Activated T-helper 1 cell treated with anti-CD3 and anti-CD28 coated beads, Interleukin-12 subunit alpha, Interleukin-12 subunit beta, Interleukin-2, Interleukin-4 antibody, amounts not matched to agents 30 ng/mL and 10 ng/mL and 1 ng/mL, durations not matched to agents 14 hours and 24 hours and 36 hours (primary cell): ENCODE measurements at regions of chr10 and their contacts with region 1.

Region 1: GRCh38 chr10:119207367-119207668 is at the start of gene GRK5:
- DNase-seq: peak; percentile 98
- H3K4me3 Mint-ChIP-seq: peak within 1 kb of the TSS; percentile 99
- H3K27ac Mint-ChIP-seq: peak within 1 kb of the TSS; percentile 99
- H3K4me1 Mint-ChIP-seq: peaks cover 49% of the 10 kb centered on the region
- H3K27me3 Mint-ChIP-seq: no peaks in the 10 kb centered on the region
- total RNA-seq, gene GRK5: 25.3 and 25.8 TPM in 2 replicates

Region 2: GRCh38 chr10:118754720-118755480 is 452.4 kb before region 1 on chr10 and contains the start of gene CACUL1:
- intact Hi-C with region 1: loop called (anchors 10 kb)
- DNase-seq: peak; percentile 100
- H3K4me3 Mint-ChIP-seq: peak within 1 kb of the TSS; percentile 87
- H3K27ac Mint-ChIP-seq: peak within 1 kb of the TSS; percentile 86
- H3K4me1 Mint-ChIP-seq: peaks cover 26% of the 10 kb centered on the region
- H3K27me3 Mint-ChIP-seq: peaks cover 15% of the 10 kb centered on the region
- total RNA-seq, gene CACUL1: 30.1 and 32.7 TPM in 2 replicates

Region 3: GRCh38 chr10:119165171-119166110 is 41.9 kb before region 1 on chr10 and contains the start of gene SFXN4:
- intact Hi-C with region 1: loop called (anchors 1 kb)
- DNase-seq: peak; percentile 82
- H3K4me3 Mint-ChIP-seq: peak within 1 kb of the TSS; percentile 91
- H3K27ac Mint-ChIP-seq: peak within 1 kb of the TSS; percentile 94
- H3K4me1 Mint-ChIP-seq: peaks cover 45% of the 10 kb centered on the region
- H3K27me3 Mint-ChIP-seq: no peaks in the 10 kb centered on the region
- total RNA-seq, gene SFXN4: 58.2 and 58.7 TPM in 2 replicates

Region 4: DNA sequence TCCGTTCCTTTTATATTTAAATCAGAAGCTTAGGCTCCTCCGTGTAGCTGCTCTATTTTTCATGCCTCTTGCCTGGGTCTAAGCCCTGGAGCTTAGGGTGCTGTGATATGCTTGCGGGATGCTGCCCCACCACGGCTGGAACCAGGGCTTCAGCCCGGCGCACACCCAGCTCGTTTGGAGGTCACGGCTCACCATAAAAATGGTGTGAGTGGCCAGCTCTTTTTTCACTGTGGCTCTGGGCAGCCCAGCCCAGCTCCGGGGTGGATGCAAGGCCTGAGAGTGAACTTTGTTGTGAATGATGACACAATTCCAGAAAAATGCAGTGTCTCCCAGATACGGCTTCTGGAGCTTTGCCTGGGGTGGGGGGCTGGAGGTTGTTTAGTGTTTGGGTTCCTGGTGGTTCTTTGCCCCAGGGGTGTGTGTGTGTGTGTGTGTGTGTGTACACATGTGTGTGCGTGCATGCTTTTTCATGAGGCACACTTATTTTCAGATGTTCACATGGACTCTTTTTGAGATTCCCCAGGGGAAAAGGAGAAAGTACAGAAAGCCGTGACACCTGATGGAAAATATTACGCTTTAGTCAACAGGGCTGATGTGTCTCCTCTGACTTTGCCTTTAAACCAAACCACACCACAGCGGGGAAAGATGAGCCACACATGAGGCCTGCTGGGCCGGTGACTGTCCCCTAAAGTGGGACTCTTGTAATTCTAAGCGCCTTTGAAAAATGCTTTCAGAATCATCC is 46.3 kb after region 1 on chr10:
- intact Hi-C with region 1: loop called (anchors 2 kb)
- DNase-seq: no peak
- H3K4me3 Mint-ChIP-seq: peak overlapping the region; percentile 15
- H3K27ac Mint-ChIP-seq: peak overlapping the region; percentile 88
- H3K4me1 Mint-ChIP-seq: peaks cover 63% of the 10 kb centered on the region
- H3K27me3 Mint-ChIP-seq: no peaks in the 10 kb centered on the region

Region 5: DNA sequence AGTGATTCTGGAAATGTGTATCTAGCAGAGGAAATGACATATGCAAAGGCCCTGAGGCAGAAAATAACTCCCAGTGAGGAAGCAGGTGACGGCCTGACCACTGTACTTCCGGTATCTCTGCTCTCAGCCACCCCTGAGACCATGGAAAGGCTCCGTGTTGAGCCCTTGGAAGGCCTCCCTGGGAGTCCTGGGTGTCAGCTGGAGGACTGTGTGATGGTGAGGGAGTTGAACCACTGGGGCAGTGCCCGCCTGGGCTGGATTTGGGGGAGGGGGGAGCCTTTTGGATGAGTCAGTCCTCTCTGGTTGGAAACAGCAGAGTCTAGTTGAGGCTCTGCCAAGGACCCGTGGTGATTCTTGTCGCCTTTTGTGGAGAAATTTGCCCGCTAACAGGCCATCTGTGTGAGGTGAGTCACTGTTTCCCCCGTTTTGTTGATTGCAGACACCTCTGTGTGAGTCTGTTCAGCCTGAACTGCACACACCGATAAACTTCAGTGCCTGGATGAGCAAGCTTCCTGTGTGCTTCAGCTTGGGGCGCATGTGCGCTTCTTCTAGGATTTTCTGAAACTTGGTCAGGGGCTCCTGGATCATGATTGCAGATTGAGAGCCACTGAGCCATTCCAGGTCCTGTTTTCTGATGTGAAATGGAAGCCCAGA is 98.7 kb after region 1 on chr10:
- intact Hi-C with region 1: loop called (anchors 1 kb)
- DNase-seq: peak; percentile 82
- H3K4me3 Mint-ChIP-seq: peak overlapping the region; percentile 79
- H3K27ac Mint-ChIP-seq: peak overlapping the region; percentile 100
- H3K4me1 Mint-ChIP-seq: peaks cover 89% of the 10 kb centered on the region
- H3K27me3 Mint-ChIP-seq: peaks cover 4% of the 10 kb centered on the region

Region 6: DNA sequence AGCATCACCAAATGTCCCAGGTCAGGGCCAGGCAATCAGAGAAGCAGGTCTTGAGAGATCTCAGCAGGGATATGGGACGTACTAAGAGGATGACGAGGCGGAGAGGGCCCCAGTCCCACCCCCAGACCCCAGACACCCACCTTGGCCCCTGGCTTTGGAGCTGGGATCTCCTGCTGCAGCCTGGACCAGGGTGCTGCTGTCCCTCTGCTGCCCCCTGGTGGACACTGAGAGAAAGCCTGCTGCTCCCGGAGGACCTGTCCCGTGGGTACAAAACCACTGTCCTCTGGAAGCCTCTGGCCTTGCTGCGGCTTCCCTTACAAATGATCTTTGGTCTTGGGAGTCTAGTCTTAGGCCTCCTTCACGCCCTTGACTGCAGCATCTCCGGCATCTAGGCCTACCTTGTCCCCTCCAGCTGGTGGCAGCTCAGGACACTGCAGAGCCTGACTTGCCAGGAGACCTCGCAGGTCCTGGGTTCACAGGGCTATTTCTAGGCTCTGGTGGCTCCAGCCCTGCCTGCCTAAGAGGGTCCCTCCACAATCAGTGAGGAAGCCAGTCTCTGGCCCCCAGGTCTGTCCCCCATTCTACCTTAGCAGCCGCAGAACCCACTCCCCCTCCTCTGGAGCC is 238.1 kb after region 1 on chr10:
- intact Hi-C with region 1: loop called (anchors 1 kb)
- DNase-seq: peak; percentile 71
- H3K4me3 Mint-ChIP-seq: no peak overlapping the region
- H3K27ac Mint-ChIP-seq: no peak overlapping the region
- H3K4me1 Mint-ChIP-seq: peaks cover 3% of the 10 kb centered on the region
- H3K27me3 Mint-ChIP-seq: no peaks in the 10 kb centered on the region

Region 7: DNA sequence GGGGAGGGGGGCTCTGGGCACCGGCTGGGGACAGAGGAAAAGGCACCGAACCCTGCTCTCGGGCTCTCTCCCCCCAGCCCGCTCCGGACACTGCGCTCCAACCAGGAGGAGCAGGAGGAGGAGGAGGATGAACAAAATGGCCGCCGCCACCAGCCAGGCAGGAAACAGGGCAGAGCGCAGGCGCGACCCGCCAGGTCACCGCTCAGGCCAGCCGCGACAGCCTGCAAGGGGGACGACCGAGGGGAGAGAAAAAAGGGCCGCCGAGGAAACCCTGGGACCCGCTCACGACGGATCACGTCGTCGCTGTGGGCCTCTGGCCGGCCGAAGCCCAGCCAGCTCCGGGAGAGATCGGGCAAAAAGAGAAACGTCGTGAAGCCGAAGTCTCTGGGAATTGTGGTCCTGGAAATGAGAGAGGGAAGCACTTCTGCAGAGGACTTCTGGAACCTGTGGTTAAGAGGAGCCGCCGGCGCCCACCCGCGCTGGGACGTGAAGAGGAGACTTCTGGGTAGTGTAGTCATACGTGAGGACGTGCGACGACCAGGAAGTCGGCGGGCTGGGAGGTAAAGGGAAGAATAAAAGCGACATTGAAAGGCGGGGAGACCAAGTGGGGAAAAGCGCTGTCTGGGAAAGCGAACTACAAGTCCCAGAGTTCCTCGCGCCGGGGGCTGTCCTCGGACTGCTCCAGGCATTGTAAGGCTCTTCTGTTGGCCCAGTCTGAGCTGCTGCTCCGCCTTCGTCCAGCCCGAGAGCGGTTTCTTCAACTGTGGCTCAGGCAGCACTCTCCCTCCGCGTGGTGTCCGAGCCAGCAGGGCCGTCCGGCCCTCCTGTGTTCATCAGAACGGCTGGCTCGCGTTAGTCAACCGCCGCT is 389.5 kb after region 1 on chr10 and contains the start of gene TIAL1:
- intact Hi-C with region 1: loop called (anchors 2 kb)
- DNase-seq: peak; percentile 92
- H3K4me3 Mint-ChIP-seq: peak within 1 kb of the TSS; percentile 91
- H3K27ac Mint-ChIP-seq: peak within 1 kb of the TSS; percentile 98
- H3K4me1 Mint-ChIP-seq: peaks cover 51% of the 10 kb centered on the region
- H3K27me3 Mint-ChIP-seq: no peaks in the 10 kb centered on the region
- total RNA-seq, gene TIAL1: 192 and 195 TPM in 2 replicates